ENCODE measurements at regions of chr6 and their contacts with region 1.

Region 1: DNA sequence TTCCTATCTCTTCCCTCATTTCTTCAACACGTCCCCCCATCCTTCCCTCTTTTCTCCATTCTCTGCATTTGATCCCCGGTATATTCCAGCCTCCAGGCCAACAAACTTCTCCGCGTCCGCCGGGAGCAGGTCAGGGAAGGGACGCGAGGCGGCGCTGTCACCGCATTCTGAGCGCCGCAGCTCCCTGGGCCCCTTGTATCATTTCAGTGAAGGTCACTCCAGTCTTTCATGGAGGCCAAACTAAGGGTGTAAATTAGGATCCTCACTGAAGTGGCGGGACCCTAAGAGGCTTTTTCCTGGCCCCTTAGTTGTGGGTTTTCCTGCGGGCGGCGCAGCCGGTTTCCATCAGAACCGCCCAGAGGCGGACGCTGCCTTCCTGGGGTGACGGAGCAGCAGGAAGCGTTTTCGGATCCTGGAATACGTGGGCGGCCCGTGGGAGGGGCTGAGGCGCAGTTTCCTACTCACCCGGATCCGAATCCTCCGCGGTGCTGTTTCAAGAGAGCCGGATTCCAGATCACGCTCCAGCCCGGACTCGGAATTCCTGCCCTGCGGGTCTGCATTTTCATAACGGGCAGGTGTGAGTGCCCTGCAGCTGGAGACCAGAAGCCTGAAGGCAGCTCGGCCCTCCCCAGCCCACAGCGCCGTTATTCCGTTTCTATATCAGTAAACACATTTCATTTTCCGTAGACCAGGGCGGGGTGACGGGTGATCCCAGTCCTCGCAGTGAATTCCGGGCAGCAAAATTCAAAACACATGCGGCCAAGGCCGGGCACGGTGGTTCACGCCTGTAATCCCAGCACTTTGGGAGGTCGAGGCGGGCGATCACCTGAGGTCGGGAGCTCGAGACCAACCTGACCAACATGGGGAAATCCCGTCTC is 3.6 kb upstream of the MICA start:
- DNase-seq: peak; percentile 94
- H3K4me3 ChIP-seq: peak overlapping the region; percentile 72 to 82
- H3K27ac ChIP-seq: peak overlapping the region; percentile 93 to 97
- H3K4me1 ChIP-seq: peaks cover 26% of the 10 kb centered on the region
- H3K27me3 ChIP-seq: no peaks in the 10 kb centered on the region
- CTCF ChIP-seq: peak; percentile 74 to 92 (median 80)
- POLR2A ChIP-seq: no peak

Region 2: GRCh38 chr6:31441365-31442267 is 41.8 kb after region 1 on chr6:
- intact Hi-C with region 1: loop called (anchors 5 kb)
- DNase-seq: peak; percentile 93
- H3K4me3 ChIP-seq: peak overlapping the region in 1 of 2 donors; percentile 45
- H3K27ac ChIP-seq: no peak overlapping the region
- H3K4me1 ChIP-seq: no peaks in the 10 kb centered on the region
- H3K27me3 ChIP-seq: no peaks in the 10 kb centered on the region
- CTCF ChIP-seq: peak; percentile 53 to 84 (median 60)
- POLR2A ChIP-seq: no peak

Region 3: GRCh38 chr6:31497531-31498476 is 98.0 kb after region 1 on chr6 and contains the start of gene MICB:
- intact Hi-C with region 1: no loop called
- DNase-seq: peak; percentile 89
- H3K4me3 ChIP-seq: peak within 1 kb of the TSS; percentile 42 to 61
- H3K27ac ChIP-seq: peak within 1 kb of the TSS in 1 of 2 donors; percentile 10
- H3K4me1 ChIP-seq: peaks cover 6% of the 10 kb centered on the region
- H3K27me3 ChIP-seq: no peaks in the 10 kb centered on the region
- CTCF ChIP-seq: no peak
- POLR2A ChIP-seq: no peak
- total RNA-seq, gene MICB: 4.4 to 5.4 TPM